ENCODE measurements at regions of chr5 and their contacts with region 1.

Region 1: GRCh38 chr5:82165740-82166530 is 112.2 kb downstream of the RPS23 start:
- DNase-seq: peak; percentile 27
- ATAC-seq: peak; percentile 93
- H3K4me3 Mint-ChIP-seq: no peak overlapping the region
- H3K27ac Mint-ChIP-seq: peak overlapping the region; percentile 74
- H3K4me1 Mint-ChIP-seq: peaks cover 43% of the 10 kb centered on the region
- H3K27me3 Mint-ChIP-seq: no peaks in the 10 kb centered on the region
- CTCF ChIP-seq: 0 out of 2 replicates have a peak, but pooled peaks have one; percentile 18

Region 2: GRCh38 chr5:81425569-81425968 is 740.4 kb before region 1 on chr5:
- CTCF ChIA-PET with region 1: interaction called, 15 read pairs
- POLR2A ChIA-PET with region 1: no interaction called
- DNase-seq: no peak
- ATAC-seq: no peak
- H3K4me3 Mint-ChIP-seq: no peak overlapping the region
- H3K27ac Mint-ChIP-seq: no peak overlapping the region
- H3K4me1 Mint-ChIP-seq: peaks cover 11% of the 10 kb centered on the region
- H3K27me3 Mint-ChIP-seq: no peaks in the 10 kb centered on the region
- CTCF ChIP-seq: peak; percentile 68

Region 3: GRCh38 chr5:81838307-81838906 is 327.5 kb before region 1 on chr5:
- CTCF ChIA-PET with region 1: interaction called, 10 read pairs
- POLR2A ChIA-PET with region 1: no interaction called
- DNase-seq: no peak
- ATAC-seq: peak; percentile 90
- H3K4me3 Mint-ChIP-seq: no peak overlapping the region
- H3K27ac Mint-ChIP-seq: no peak overlapping the region
- H3K4me1 Mint-ChIP-seq: peaks cover 17% of the 10 kb centered on the region
- H3K27me3 Mint-ChIP-seq: no peaks in the 10 kb centered on the region
- CTCF ChIP-seq: peak; percentile 28; the same call in 1 of the 2 replicates

Region 4: GRCh38 chr5:81856948-81857928 is 308.7 kb before region 1 on chr5:
- CTCF ChIA-PET with region 1: interaction called, 45 read pairs
- POLR2A ChIA-PET with region 1: interaction called, 4 read pairs
- DNase-seq: peak; percentile 42
- ATAC-seq: peak; percentile 64
- H3K4me3 Mint-ChIP-seq: no peak overlapping the region
- H3K27ac Mint-ChIP-seq: peak overlapping the region; percentile 17; the same call in 1 of the 2 replicates
- H3K4me1 Mint-ChIP-seq: peaks cover 52% of the 10 kb centered on the region
- H3K27me3 Mint-ChIP-seq: no peaks in the 10 kb centered on the region; the same call in 1 of the 2 replicates
- CTCF ChIP-seq: peak; percentile 30

Region 5: DNA sequence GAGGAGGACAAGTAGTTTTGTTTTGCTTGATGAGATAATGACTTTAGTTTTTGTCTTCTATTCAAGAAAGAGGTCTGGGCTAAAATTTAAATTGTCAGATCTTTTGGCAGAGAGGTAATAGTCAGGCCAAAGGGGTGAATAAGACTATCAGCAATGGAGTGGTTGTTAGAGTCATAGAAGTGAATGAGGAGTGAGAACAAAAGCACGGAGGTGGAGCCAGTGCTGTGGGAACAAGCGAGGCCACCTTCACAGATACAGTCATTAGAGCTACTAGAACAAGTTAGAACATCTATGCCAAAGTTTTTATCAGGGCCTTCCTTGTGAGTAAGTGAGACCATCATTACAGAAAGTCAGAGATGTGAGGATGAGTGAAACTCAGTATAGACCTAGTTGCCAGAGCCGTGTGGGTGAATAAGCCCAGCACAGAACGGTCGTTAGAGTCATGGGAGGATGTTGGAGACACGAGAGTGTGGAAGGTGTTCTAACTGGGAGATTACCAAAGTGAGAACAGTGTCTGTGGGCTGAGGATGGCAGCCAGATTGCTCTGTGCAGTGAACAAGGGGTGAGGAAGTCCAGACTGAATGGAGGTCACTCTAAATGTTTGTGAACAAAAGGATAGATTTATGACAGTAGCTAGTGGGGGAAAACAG is 22.9 kb before region 1 on chr5:
- CTCF ChIA-PET with region 1: no interaction called
- POLR2A ChIA-PET with region 1: no interaction called
- DNase-seq: no peak
- ATAC-seq: no peak
- H3K4me3 Mint-ChIP-seq: no peak overlapping the region
- H3K27ac Mint-ChIP-seq: peak overlapping the region; percentile 61
- H3K4me1 Mint-ChIP-seq: no peaks in the 10 kb centered on the region
- H3K27me3 Mint-ChIP-seq: no peaks in the 10 kb centered on the region
- CTCF ChIP-seq: no peak

Region 6: GRCh38 chr5:82259172-82259800 is 93.4 kb after region 1 on chr5:
- CTCF ChIA-PET with region 1: interaction called, 10 read pairs
- POLR2A ChIA-PET with region 1: no interaction called
- DNase-seq: no peak
- ATAC-seq: peak; percentile 21; the same call in 1 of the 2 replicates
- H3K4me3 Mint-ChIP-seq: no peak overlapping the region
- H3K27ac Mint-ChIP-seq: no peak overlapping the region
- H3K4me1 Mint-ChIP-seq: peaks cover 16% of the 10 kb centered on the region
- H3K27me3 Mint-ChIP-seq: no peaks in the 10 kb centered on the region
- CTCF ChIP-seq: no peak